GM13976 (cell line): ENCODE measurements at regions of chr14 and their contacts with region 1.

Region 1: GRCh38 chr14:64303471-64303917 is 9.3 kb upstream of the ESR2 start:
- DNase-seq: peak; percentile 82
- CTCF ChIP-seq: peak; percentile 47

Region 2: DNA sequence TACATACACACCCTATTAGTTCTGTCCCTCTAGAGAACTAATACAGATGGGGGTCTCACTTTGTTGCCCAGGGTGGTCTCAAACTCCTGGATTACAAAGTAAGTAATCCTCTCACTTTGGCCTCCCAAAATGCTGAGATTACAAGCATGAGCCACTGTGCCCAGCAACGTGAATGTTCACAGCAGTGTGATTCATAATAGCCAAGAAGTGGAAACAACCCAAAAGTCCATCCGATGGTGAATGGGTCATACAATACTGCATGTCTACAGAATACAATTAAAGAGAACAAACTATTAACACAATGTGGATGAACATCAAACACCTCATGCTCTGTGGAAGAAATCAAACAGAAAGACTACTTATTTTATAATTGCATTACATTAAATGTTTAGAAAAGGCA is 508.0 kb before region 1 on chr14:
- in situ Hi-C with region 1: loop called (anchors 10 kb)
- DNase-seq: no peak
- CTCF ChIP-seq: no peak